Testis (tissue), 5 donors: ENCODE measurements at regions of chr11 and their contacts with region 1.

Region 1: GRCh38 chr11:114262681-114263512 is 33.3 kb upstream of the NNMT start:
- DNase-seq: peak; percentile 57
- H3K4me3 ChIP-seq: no peak overlapping the region
- H3K27ac ChIP-seq: no peak overlapping the region
- H3K4me1 ChIP-seq: peaks cover 17% of the 10 kb centered on the region
- H3K27me3 ChIP-seq: no peaks in the 10 kb centered on the region
- CTCF ChIP-seq: peak; percentile 36 to 62 (median 55)
- POLR2A ChIP-seq: no peak

Region 2: DNA sequence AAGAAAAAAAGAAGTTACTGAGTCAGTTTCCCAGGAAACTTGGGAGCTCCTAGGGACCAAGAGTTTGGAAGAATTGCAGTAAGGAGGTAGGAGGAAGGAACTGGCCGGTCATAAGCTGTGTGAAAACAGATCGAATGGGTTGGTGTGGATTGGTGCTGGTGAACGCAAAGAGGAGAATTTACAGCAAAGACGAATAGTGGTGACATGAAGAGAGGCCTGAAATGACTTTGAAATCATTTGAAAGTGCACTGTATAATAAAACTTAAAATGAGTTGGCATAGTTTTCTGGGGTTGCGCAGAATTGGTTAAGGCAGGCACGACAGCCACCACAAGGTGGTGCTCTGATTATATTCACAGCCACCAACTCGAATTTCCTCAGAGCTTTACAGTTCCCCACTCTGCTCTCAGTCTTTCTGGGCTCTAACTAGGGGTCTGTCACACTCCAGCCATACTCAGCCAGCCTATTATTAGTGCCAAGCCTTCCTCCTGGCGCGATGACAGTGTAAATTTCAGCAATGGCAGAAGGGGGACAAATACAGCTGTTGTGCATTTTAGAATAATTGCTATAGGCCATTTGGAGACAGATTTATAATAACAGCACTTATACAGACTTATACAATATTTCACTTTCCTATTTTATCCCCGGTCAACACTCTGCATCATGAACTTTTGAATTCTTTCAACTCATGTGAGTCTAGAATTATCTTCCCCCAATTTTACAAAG is 366.6 kb before region 1 on chr11:
- intact Hi-C with region 1: loop called (anchors 10 kb)
- DNase-seq: peak; percentile 66
- H3K4me3 ChIP-seq: no peak overlapping the region
- H3K27ac ChIP-seq: no peak overlapping the region
- H3K4me1 ChIP-seq: peaks cover 9% of the 10 kb centered on the region
- H3K27me3 ChIP-seq: no peaks in the 10 kb centered on the region
- CTCF ChIP-seq: peak; percentile 64 to 76 (median 70)
- POLR2A ChIP-seq: no peak

Region 3: GRCh38 chr11:113997473-113997872 is 265.4 kb before region 1 on chr11:
- intact Hi-C with region 1: loop called (anchors 5 kb)
- DNase-seq: no peak
- H3K4me3 ChIP-seq: no peak overlapping the region
- H3K27ac ChIP-seq: no peak overlapping the region
- H3K4me1 ChIP-seq: no peaks in the 10 kb centered on the region
- H3K27me3 ChIP-seq: no peaks in the 10 kb centered on the region
- CTCF ChIP-seq: no peak
- POLR2A ChIP-seq: no peak